OCI-LY7 (cell line): ENCODE measurements at regions of chr9 and their contacts with region 1.

Region 1: GRCh38 chr9:83937911-83938323 is 16.7 kb upstream of the KIF27 start:
- DNase-seq: peak; percentile 80
- H3K4me3 ChIP-seq: no peak overlapping the region
- H3K27ac ChIP-seq: no peak overlapping the region
- H3K4me1 ChIP-seq: no peaks in the 10 kb centered on the region
- CTCF ChIP-seq: peak; percentile 89

Region 2: GRCh38 chr9:84173404-84173704 is 235.4 kb after region 1 on chr9:
- CTCF ChIA-PET with region 1: no interaction called
- POLR2A ChIA-PET with region 1: no interaction called
- intact Hi-C with region 1: loop called (anchors 1 kb)
- DNase-seq: no peak
- H3K4me3 ChIP-seq: no peak overlapping the region
- H3K27ac ChIP-seq: no peak overlapping the region
- H3K4me1 ChIP-seq: no peaks in the 10 kb centered on the region
- CTCF ChIP-seq: peak; percentile 58; the same call in 1 of the 2 replicates

Region 3: DNA sequence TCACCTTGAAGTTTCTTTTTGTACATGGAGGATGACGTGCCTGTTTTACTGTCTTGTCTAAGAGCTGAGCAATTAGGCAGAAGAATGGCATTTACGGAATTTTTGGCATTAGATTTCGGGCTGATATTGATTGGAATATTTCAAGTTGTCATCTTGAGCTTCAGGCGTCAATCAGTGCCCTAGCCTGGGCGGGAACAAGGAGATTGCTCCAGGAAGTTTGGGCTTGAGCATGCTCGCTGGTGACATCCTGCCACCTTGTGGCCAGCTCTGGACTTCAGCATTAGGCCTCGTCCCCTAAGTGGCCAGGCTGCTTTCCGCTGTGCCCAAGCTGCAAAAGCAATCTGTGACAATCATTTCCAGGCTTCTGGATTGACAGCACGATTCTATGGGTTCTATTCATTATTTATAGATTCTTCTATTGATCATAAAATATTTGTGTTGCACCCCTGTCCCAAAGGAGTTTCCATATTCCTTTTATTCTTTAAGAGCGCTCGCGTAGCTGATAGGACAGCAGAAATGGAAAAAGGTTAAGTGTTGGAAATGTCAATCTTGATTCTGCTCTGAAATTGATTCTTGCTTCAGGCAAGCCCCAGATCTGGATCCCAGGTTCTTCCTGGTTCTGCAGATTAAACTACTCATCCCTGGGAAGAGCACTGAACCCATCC is 323.3 kb after region 1 on chr9:
- CTCF ChIA-PET with region 1: interaction called, 3 read pairs
- POLR2A ChIA-PET with region 1: no interaction called
- intact Hi-C with region 1: loop called (anchors 1 kb)
- DNase-seq: peak; percentile 62
- H3K4me3 ChIP-seq: no peak overlapping the region
- H3K27ac ChIP-seq: no peak overlapping the region
- H3K4me1 ChIP-seq: no peaks in the 10 kb centered on the region
- CTCF ChIP-seq: peak; percentile 90

Region 4: GRCh38 chr9:84315278-84315877 is 377.5 kb after region 1 on chr9:
- CTCF ChIA-PET with region 1: no interaction called
- POLR2A ChIA-PET with region 1: interaction called, 3 read pairs
- intact Hi-C with region 1: loop called (anchors 1 kb)
- DNase-seq: peak; percentile 40
- H3K4me3 ChIP-seq: no peak overlapping the region
- H3K27ac ChIP-seq: no peak overlapping the region
- H3K4me1 ChIP-seq: no peaks in the 10 kb centered on the region
- CTCF ChIP-seq: peak; percentile 81